CD14-positive monocyte (primary cell): ENCODE measurements at regions of chr15 and their contacts with region 1.

Region 1: DNA sequence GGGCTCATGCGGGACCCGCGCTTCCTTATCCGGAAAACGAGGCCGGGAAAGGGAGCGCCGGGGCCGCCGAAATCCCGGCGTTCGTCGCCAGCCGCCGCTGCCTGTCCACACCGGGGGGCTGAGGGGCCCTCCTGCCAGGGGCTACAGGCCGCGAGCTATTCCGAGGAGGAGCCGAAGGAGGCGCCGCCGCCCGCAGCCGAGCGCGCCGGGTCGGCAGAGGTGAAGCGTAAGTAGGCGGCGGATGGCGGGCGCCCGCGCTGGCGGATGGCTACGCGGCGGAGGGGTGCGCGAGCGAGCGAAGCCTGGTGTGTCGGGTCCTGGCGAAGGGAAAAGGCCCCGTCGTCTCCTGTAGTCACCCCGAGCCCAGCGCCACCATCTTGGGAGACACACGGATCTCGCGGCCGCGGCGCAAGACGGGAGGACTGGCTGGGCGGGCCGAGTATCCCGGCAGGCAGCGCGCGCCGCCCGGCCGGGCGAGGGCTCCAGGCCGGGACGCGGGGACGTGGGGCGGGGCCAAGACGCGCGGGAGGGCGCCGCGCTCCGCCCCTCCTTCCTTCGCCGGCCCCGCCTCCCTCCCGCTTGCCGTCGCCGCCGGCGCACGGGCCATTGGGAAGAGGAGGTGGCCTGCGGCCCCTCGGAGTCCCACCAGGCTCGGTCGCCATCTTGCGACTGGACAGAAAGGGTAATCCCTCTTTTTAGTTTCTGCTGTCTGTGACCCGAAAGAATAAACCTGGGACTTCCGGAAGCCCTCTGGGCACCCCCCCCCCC is at the start of gene UBE3A:
- DNase-seq: peak; percentile 84 to 86 (median 85)
- H3K4me3 ChIP-seq: peak within 1 kb of the TSS; percentile 80 to 90 (median 83)
- H3K4me3 Mint-ChIP-seq: peak within 1 kb of the TSS; percentile 89
- H3K27ac ChIP-seq: peak within 1 kb of the TSS; percentile 77 to 92
- H3K27ac Mint-ChIP-seq: peak within 1 kb of the TSS; percentile 84 to 96 (median 91)
- H3K4me1 ChIP-seq: peaks cover 18 to 27% of the 10 kb centered on the region in 2 donors
- H3K4me1 Mint-ChIP-seq: peaks cover 26% of the 10 kb centered on the region
- H3K27me3 ChIP-seq: no peaks in the 10 kb centered on the region
- H3K27me3 Mint-ChIP-seq: no peaks in the 10 kb centered on the region
- CTCF ChIP-seq: peak; percentile 9
- polyA plus RNA-seq, gene UBE3A: 13.9 to 73.3 (median 54.5) TPM

Region 2: GRCh38 chr15:25226360-25226759 is 212.4 kb before region 1 on chr15:
- intact Hi-C with region 1: no loop called
- DNase-seq: no peak
- H3K4me3 ChIP-seq: no peak overlapping the region
- H3K4me3 Mint-ChIP-seq: no peak overlapping the region
- H3K27ac ChIP-seq: no peak overlapping the region
- H3K27ac Mint-ChIP-seq: no peak overlapping the region
- H3K4me1 ChIP-seq: no peaks in the 10 kb centered on the region
- H3K4me1 Mint-ChIP-seq: no peaks in the 10 kb centered on the region
- H3K27me3 ChIP-seq: no peaks in the 10 kb centered on the region
- H3K27me3 Mint-ChIP-seq: no peaks in the 10 kb centered on the region
- CTCF ChIP-seq: no peak

Region 3: DNA sequence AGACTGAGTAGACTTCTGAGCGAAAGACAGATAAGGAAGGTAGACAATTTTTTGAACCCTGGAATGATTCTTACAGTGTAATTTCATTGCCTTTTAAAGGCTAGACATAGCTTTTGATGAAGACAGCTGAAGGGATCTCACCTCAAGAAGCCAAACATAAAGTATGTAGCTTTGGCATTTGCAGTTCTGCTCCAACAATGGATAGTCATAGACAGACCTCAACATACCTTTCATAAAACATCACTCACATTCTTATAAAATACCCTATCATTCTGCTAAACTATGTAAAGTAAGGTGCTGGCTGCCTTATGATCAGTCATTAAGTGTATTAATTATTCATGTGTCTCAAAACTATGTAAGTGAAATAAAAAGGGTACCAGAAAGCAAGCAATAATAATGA is 69.9 kb before region 1 on chr15:
- intact Hi-C with region 1: loop called in 1 of 2 experiments (anchors 5 kb)
- DNase-seq: no peak
- H3K4me3 ChIP-seq: no peak overlapping the region
- H3K4me3 Mint-ChIP-seq: no peak overlapping the region
- H3K27ac ChIP-seq: no peak overlapping the region
- H3K27ac Mint-ChIP-seq: no peak overlapping the region
- H3K4me1 ChIP-seq: peaks cover 0 to 7% of the 10 kb centered on the region in 2 donors
- H3K4me1 Mint-ChIP-seq: peaks cover 11% of the 10 kb centered on the region
- H3K27me3 ChIP-seq: no peaks in the 10 kb centered on the region
- H3K27me3 Mint-ChIP-seq: no peaks in the 10 kb centered on the region
- CTCF ChIP-seq: no peak

Region 4: DNA sequence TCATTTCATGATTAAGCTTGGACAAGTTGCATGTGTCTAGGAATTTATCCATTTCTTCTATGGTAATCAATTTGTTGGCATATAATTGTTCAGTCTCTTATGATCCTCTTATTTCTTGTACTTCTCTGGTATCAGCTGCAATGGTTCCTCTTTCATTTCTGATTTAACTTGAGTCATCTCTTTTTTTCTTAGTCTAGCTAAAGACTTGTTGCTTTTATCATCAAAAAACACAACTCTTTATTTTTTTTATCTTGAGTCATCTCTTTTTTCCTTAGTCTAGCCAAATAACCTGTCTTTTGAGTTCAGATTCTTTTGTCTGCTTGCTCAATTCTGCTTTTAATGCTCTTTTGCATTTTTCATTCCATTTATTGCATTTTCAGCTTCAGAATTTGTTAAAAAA is 37.3 kb before region 1 on chr15:
- intact Hi-C with region 1: loop called in 1 of 2 experiments (anchors 5 kb)
- DNase-seq: peak; percentile 17 to 51 (median 44)
- H3K4me3 ChIP-seq: no peak overlapping the region
- H3K4me3 Mint-ChIP-seq: peak overlapping the region in 1 of 2 donors; percentile 49
- H3K27ac ChIP-seq: peak overlapping the region in 1 of 2 donors; percentile 63
- H3K27ac Mint-ChIP-seq: peak overlapping the region; percentile 11 to 79 (median 69)
- H3K4me1 ChIP-seq: peaks cover 36 to 54% of the 10 kb centered on the region in 2 donors
- H3K4me1 Mint-ChIP-seq: peaks cover 51% of the 10 kb centered on the region
- H3K27me3 ChIP-seq: no peaks in the 10 kb centered on the region
- H3K27me3 Mint-ChIP-seq: no peaks in the 10 kb centered on the region
- CTCF ChIP-seq: no peak

Region 5: GRCh38 chr15:25510146-25510545 is 71.4 kb after region 1 on chr15:
- intact Hi-C with region 1: no loop called
- DNase-seq: no peak
- H3K4me3 ChIP-seq: no peak overlapping the region
- H3K4me3 Mint-ChIP-seq: no peak overlapping the region
- H3K27ac ChIP-seq: no peak overlapping the region
- H3K27ac Mint-ChIP-seq: no peak overlapping the region
- H3K4me1 ChIP-seq: no peaks in the 10 kb centered on the region
- H3K4me1 Mint-ChIP-seq: no peaks in the 10 kb centered on the region
- H3K27me3 ChIP-seq: no peaks in the 10 kb centered on the region
- H3K27me3 Mint-ChIP-seq: no peaks in the 10 kb centered on the region
- CTCF ChIP-seq: no peak